ENCODE measurements at regions of chr11 and their contacts with region 1.

Region 1: DNA sequence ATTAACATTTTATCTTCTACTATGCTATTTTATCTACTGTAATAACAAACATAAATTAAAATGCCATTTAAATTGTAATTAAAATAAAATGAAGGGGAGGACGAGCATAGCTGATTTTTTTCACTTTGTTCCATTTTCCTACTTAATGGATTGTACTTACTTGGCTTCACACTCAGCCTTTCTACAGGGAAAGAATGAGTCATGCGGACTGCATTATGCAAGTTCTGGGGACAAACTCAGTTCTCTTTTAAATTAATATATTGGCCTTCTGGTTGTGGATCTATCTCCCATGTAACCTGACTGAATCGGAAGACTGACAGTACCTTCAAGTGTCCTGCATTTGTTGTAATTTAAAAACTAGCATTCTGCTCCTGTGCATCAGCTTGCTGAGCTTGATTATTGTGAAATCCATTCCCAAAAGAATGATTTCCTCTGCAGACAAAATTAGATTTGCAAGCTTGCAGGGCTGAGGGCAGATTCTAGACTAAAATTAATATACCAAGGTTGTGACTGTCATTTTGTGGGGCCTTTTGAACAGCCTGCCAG is 12.2 kb downstream of the OR8D1 start:
- DNase-seq: no peak
- H3K4me3 Mint-ChIP-seq: no peak overlapping the region
- H3K27ac Mint-ChIP-seq: no peak overlapping the region
- H3K4me1 Mint-ChIP-seq: no peaks in the 10 kb centered on the region
- H3K27me3 Mint-ChIP-seq: no peaks in the 10 kb centered on the region
- CTCF ChIP-seq: no peak

Region 2: GRCh38 chr11:124329787-124330478 is 28.4 kb after region 1 on chr11:
- CTCF ChIA-PET with region 1: no interaction called
- intact Hi-C with region 1: loop called (anchors 1 kb)
- DNase-seq: no peak
- H3K4me3 Mint-ChIP-seq: no peak overlapping the region
- H3K27ac Mint-ChIP-seq: no peak overlapping the region
- H3K4me1 Mint-ChIP-seq: no peaks in the 10 kb centered on the region
- H3K27me3 Mint-ChIP-seq: no peaks in the 10 kb centered on the region
- CTCF ChIP-seq: no peak

Region 3: GRCh38 chr11:124493016-124493655 is 191.6 kb after region 1 on chr11:
- CTCF ChIA-PET with region 1: no interaction called
- intact Hi-C with region 1: no loop called
- DNase-seq: no peak
- H3K4me3 Mint-ChIP-seq: no peak overlapping the region
- H3K27ac Mint-ChIP-seq: no peak overlapping the region
- H3K4me1 Mint-ChIP-seq: no peaks in the 10 kb centered on the region
- H3K27me3 Mint-ChIP-seq: no peaks in the 10 kb centered on the region
- CTCF ChIP-seq: no peak